Colonic mucosa (tissue), 4 donors: ENCODE measurements at regions of chr17 and their contacts with region 1.

Region 1: DNA sequence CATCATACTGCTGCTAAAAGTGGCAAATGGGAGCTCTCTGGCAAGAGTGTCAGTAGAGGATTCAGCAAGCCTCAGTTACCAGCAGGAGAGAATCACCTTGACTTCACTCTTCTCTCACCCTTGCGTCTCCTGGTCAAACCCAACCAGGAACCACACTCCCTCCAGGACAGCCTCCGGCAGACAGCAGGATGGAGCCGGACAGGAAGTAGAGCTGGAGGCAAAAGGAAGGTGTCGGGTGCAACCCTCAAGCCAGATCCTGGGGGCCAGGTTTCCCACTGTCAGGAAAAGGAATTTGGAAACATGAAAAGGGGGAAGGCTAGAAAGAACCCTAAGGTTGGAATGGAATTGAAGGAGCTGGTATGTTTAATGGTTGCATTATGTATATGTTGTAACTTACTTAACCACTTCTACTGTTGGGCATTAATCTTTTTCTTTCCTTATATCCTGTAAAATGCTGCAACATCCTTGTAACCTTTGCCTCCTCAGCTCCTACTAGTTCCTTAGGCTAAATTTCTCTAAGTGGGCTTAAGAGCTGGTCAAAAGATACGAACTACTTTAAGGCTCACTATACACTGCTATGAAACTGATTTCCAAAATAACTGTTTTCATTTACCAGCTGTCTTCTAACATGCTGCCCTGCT is 40.3 kb downstream of the CYTH1 start:
- DNase-seq: no peak
- H3K4me3 ChIP-seq: no peak overlapping the region
- H3K27ac ChIP-seq: no peak overlapping the region
- H3K4me1 ChIP-seq: peaks cover 13% of the 10 kb centered on the region
- H3K27me3 ChIP-seq: no peaks in the 10 kb centered on the region
- CTCF ChIP-seq: no peak

Region 2: GRCh38 chr17:78541488-78542237 is 200.1 kb before region 1 on chr17:
- intact Hi-C with region 1: no loop called
- DNase-seq: no peak
- H3K4me3 ChIP-seq: no peak overlapping the region
- H3K27ac ChIP-seq: no peak overlapping the region
- H3K4me1 ChIP-seq: no peaks in the 10 kb centered on the region
- H3K27me3 ChIP-seq: no peaks in the 10 kb centered on the region
- CTCF ChIP-seq: no peak

Region 3: DNA sequence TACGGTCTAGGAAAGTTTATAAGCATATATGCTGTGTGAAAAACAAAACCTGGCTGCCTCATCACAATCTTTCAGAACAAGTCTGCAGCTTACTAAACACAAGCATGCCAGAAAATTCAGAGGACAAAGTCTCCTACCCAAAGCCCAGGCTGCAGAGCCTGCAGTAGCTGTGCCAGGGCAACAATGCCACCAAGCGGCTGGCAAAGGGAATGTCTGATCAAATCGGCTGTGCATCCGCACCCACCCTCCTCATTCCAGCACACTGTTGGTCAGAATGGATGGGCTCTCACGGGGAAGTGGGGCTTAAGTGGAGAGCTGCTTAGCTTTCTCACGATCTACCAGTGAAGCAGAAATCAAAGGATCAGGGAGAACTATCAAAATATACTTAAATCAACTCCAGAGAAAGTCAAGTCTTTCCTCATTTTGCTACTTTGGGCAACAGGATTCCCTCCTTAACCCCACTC is 33.2 kb before region 1 on chr17:
- intact Hi-C with region 1: loop called (anchors 5 kb)
- DNase-seq: peak; percentile 63
- H3K4me3 ChIP-seq: no peak overlapping the region
- H3K27ac ChIP-seq: no peak overlapping the region
- H3K4me1 ChIP-seq: peaks cover 3% of the 10 kb centered on the region
- H3K27me3 ChIP-seq: no peaks in the 10 kb centered on the region
- CTCF ChIP-seq: peak; percentile 77

Region 4: DNA sequence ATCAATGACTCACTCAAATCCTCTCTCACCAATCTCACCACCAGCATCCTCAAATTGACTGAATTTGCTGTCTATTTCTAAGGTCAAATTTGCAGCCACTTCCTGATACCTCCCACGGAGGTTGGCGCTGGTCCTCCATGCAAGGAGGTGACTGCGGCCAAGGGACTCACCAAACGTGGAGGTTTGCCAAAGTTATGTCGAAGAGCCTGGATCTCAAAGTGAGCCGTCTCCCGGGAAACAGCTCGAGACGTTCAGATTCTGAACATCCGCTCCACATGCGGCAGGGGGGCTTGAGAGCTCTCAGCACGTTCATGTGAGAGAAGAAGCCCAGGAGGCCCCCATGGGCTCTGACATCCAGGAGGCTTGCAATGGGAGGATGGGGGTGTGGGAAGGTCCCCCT is 215.4 kb after region 1 on chr17:
- intact Hi-C with region 1: no loop called
- DNase-seq: no peak
- H3K4me3 ChIP-seq: no peak overlapping the region
- H3K27ac ChIP-seq: no peak overlapping the region
- H3K4me1 ChIP-seq: no peaks in the 10 kb centered on the region
- H3K27me3 ChIP-seq: no peaks in the 10 kb centered on the region
- CTCF ChIP-seq: no peak